Motor neuron (in vitro differentiated cells): ENCODE measurements at regions of chr3 and their contacts with region 1.

Region 1: GRCh38 chr3:53938645-53939044 is 47.0 kb upstream of the SELENOK start:
- ATAC-seq: peak; percentile 53 to 83 (median 67)
- H3K4me3 ChIP-seq: no peak overlapping the region
- H3K27ac ChIP-seq: no peak overlapping the region
- H3K4me1 ChIP-seq: peaks cover 0 to 2% of the 10 kb centered on the region in 2 donors

Region 2: GRCh38 chr3:54120657-54121413 is 182.2 kb after region 1 on chr3:
- in situ Hi-C with region 1: loop called in 1 of 9 experiments (anchors 25 kb)
- ATAC-seq: peak in 7 of 8 experiments; percentile 3 to 21 (median 12)
- H3K4me3 ChIP-seq: peak overlapping the region; percentile 41 to 80 (median 55)
- H3K27ac ChIP-seq: no peak overlapping the region
- H3K4me1 ChIP-seq: peaks cover 5 to 9% of the 10 kb centered on the region in 2 donors